Transverse colon (tissue), 4 donors: ENCODE measurements at regions of chr1 and their contacts with region 1.

Region 1: DNA sequence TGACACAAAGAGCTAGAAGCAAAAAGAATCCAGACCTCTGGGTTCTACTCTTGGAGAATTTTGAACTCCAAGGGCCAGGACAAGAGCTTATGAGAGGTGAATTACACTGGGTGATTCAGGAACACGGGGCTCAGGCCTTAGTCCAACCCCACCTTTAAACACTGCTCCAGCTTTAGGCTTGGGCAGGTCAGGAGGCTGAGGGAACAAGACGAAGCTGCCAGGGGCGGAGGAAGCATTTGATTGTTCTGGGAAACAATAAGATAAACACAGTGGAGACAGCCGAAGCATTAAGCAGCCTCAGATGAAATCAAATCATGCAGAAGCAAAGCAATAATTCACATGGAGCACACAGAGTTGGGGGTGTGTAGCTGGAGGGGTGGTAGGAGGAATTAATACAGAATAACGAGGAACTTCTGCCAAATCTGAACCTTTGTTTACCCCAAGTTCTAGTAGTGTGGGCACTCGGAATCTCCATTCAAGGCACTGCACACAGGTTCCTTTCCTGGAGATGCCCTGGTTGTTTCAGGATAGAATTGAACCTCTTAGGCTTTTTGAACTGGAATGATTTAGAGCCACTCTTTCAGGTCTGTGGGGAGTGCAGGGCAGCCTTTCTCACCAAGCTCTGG is 93.2 kb downstream of the PLXNA2 start:
- DNase-seq: peak; percentile 50
- H3K4me3 ChIP-seq: no peak overlapping the region
- H3K27ac ChIP-seq: peak overlapping the region; percentile 65 to 74 (median 72)
- H3K4me1 ChIP-seq: peaks cover 6 to 62% (median 46%) of the 10 kb centered on the region in 4 donors
- H3K27me3 ChIP-seq: no peaks in the 10 kb centered on the region
- CTCF ChIP-seq: no peak
- EP300 ChIP-seq: no peak
- POLR2A ChIP-seq: no peak

Region 2: DNA sequence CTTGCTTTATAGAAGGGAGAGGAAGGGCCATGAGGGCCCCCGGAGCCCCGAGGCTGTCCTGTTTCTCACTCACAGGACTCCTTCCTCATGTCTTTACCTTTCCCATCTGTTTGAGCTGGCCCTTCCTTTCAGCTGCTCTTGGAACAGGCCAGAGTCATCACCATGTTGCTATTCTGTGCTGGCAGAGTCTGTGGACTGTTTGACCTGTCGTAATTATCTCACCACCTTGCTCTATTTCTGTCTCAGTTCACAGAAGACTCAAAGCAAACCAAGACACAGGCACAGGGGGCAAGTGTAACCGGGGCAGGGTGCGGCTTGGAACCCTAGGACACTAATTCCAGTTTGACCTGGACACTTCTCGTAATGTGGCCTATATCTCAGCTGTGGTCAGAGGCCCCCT is 135.7 kb before region 1 on chr1:
- in situ Hi-C with region 1: no loop called
- intact Hi-C with region 1: no loop called
- DNase-seq: no peak
- H3K4me3 ChIP-seq: no peak overlapping the region
- H3K27ac ChIP-seq: no peak overlapping the region
- H3K4me1 ChIP-seq: no peaks in the 10 kb centered on the region
- H3K27me3 ChIP-seq: no peaks in the 10 kb centered on the region
- CTCF ChIP-seq: no peak
- EP300 ChIP-seq: no peak
- POLR2A ChIP-seq: no peak

Region 3: DNA sequence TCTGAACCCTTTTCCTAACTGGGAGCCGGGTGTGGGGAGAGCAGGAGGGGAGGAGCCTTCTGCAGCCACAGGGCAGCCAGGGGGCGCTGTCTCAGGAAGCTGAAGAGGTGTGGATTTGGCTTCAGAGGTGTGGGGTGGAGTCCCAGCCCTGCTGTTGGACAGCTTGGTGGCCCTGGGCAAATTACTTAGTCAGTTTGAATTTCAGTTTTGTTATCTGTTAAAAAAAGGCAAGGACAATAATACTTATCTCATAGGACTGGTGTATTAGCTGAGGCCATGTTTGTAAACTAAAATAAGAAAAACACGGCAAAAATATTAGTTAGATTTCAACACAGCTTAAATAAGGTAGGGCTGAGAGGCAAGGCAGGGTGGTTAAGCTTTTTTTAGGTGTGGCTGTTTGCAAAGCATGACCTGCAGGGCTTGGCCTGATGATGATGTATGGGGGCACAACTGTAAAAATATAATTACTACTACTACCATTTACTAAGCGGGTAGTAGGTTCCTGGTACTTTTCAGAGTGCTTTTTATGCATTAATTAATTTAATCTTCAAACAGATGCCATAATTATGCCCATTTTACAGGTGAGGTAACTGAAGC is 18.6 kb before region 1 on chr1:
- in situ Hi-C with region 1: no loop called
- intact Hi-C with region 1: loop called (anchors 1 kb)
- DNase-seq: peak; percentile 94
- H3K4me3 ChIP-seq: no peak overlapping the region
- H3K27ac ChIP-seq: peak overlapping the region; percentile 53 to 69 (median 62)
- H3K4me1 ChIP-seq: peaks cover 4 to 30% (median 15%) of the 10 kb centered on the region in 4 donors
- H3K27me3 ChIP-seq: no peaks in the 10 kb centered on the region
- CTCF ChIP-seq: peak; percentile 74 to 95 (median 84)
- EP300 ChIP-seq: no peak
- POLR2A ChIP-seq: no peak